ENCODE measurements at regions of chr17 and their contacts with region 1.

Region 1: GRCh38 chr17:49637050-49637449 is 40.8 kb downstream of the SPOP start:
- DNase-seq: no peak
- ATAC-seq: no peak
- H3K4me3 ChIP-seq: no peak overlapping the region
- H3K27ac ChIP-seq: peak overlapping the region in 9 of 12 donors; percentile 4 to 91 (median 59)
- H3K4me1 ChIP-seq: peaks cover 12 to 80% (median 50%) of the 10 kb centered on the region in 12 donors
- H3K27me3 ChIP-seq: no peaks in the 10 kb centered on the region
- CTCF ChIP-seq: no peak
- POLR2A ChIP-seq: no peak

Region 2: GRCh38 chr17:49670002-49670401 is 33.0 kb after region 1 on chr17:
- intact Hi-C with region 1: loop called in 6 of 10 experiments (anchors 5 kb)
- DNase-seq: no peak
- ATAC-seq: no peak
- H3K4me3 ChIP-seq: no peak overlapping the region
- H3K27ac ChIP-seq: peak overlapping the region in 4 of 12 donors; percentile 2 to 97 (median 20)
- H3K4me1 ChIP-seq: peaks cover 0 to 65% (median 46%) of the 10 kb centered on the region in 12 donors
- H3K27me3 ChIP-seq: no peaks in the 10 kb centered on the region
- CTCF ChIP-seq: no peak
- POLR2A ChIP-seq: no peak

Region 3: DNA sequence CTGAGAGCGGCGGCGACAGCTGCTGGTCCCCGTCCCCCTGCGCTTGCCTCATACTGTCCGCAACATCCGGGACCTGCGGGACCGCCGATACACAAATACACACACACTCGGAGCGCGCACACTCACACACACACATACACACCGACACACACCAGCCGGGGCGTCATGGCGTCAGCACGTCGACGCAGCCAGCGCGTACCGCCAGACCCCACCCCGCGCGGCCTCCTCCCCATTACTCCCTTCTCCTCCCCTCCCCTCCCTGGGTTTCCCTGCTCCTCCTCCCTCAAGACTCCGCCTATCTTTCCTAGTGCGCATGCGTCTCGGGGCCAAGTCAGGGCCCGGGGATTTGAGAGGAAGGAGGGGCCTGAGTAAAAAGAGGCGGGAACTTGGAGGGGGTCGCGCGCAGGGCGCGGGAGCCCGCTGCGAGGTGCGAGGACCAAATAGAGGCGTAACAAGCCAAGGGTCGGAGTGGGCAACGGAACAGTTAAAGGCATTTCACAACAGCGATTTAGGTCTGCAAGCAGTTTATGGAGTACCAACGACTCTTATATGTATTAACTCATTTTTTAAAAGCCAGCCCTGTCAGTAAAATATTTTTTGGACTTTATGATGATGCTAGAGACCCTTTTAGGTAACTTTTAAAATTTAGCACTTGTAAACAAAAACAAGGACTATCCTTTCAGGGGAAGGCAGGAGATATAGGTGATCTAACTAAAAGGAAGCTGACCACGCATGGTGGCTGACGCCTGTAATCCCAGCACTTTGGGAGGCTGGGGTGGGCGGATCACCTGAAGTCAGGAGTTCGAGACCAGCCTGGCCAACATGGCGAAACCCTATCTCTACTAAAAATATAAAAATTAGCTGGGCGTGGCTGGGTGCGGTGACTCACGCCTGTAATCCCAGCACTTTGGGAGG is 41.1 kb after region 1 on chr17 and contains the start of gene SPOP:
- intact Hi-C with region 1: loop called in 6 of 10 experiments (anchors 5 kb)
- DNase-seq: peak; percentile 99 to 100 (median 100)
- ATAC-seq: peak; percentile 98 to 99 (median 99)
- H3K4me3 ChIP-seq: peak within 1 kb of the TSS; percentile 33 to 89 (median 76)
- H3K27ac ChIP-seq: peak within 1 kb of the TSS; percentile 90 to 99 (median 97)
- H3K4me1 ChIP-seq: peaks cover 0 to 59% (median 35%) of the 10 kb centered on the region in 12 donors
- H3K27me3 ChIP-seq: no peaks in the 10 kb centered on the region
- CTCF ChIP-seq: peak in 1 of 12 donors; percentile 11
- POLR2A ChIP-seq: peak in 1 of 2 donors; percentile 49
- total RNA-seq, gene SPOP: 46.7 to 96.1 (median 60.4) TPM

Measured in heart left ventricle (tissue), 16 donors.